Lower leg skin (tissue), 4 donors: ENCODE measurements at regions of chr19 and their contacts with region 1.

Region 1: DNA sequence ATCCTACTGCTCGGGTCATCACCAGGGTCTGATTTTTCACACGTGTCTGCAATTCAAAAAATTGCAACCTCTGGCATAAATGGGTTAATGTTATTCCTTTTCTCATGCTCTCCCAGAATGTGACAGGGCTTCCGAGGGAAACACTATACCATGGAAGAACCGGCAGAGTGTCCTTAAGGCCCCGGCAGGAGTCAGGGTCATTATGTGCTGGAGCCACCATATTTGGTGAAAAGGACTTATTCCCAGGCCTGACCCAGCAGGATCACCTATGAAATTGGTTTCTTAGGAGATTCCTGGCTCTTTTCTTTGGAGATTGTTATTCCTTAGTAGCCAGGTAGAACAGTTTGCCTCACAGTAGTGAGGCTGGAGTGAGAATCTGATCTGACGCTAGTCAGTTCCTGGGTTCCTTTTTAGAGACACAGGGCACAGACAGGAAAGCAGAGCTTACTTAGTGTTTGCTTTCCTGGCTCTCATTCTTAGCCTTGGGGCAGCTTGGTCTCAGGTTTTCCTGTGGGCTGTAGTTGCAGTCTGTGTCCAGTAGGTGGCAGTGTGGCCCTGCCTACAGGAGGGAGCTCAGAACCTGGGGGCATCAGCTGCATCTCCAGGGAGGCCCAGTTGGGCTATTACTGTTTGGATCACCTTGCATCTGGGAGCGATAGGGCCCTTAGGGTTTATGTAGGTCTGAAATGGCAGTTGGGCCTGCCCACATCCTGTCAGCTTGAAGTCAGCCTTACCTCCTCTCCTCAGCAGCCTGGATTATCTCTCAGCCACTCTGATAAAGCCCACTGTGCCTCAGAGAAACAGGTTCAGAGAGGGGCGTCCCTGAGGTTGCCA is 12.4 kb downstream of the SNRNP70 start:
- DNase-seq: peak; percentile 62 to 93
- H3K4me3 ChIP-seq: no peak overlapping the region
- CTCF ChIP-seq: peak in 1 of 3 donors; percentile 92
- POLR2A ChIP-seq: no peak

Region 2: GRCh38 chr19:48872182-48872883 is 225.3 kb before region 1 on chr19 and contains the start of gene PPP1R15A:
- intact Hi-C with region 1: no loop called
- DNase-seq: peak; percentile 99 to 100
- H3K4me3 ChIP-seq: peak within 1 kb of the TSS; percentile 100
- CTCF ChIP-seq: no peak
- POLR2A ChIP-seq: peak in 1 of 2 donors; percentile 99
- total RNA-seq, gene PPP1R15A: 91.6 to 152 (median 97.5) TPM

Region 3: GRCh38 chr19:49148784-49149651 is 51.3 kb after region 1 on chr19:
- intact Hi-C with region 1: loop called (anchors 5 kb)
- DNase-seq: peak; percentile 96 to 99
- H3K4me3 ChIP-seq: peak overlapping the region; percentile 63
- CTCF ChIP-seq: no peak
- POLR2A ChIP-seq: no peak

Region 4: GRCh38 chr19:49196527-49197240 is 99.0 kb after region 1 on chr19:
- intact Hi-C with region 1: loop called (anchors 2 kb)
- DNase-seq: no peak
- H3K4me3 ChIP-seq: no peak overlapping the region
- CTCF ChIP-seq: no peak
- POLR2A ChIP-seq: no peak